CD8-positive, alpha-beta memory T cell (primary cell): ENCODE measurements at regions of chr6 and their contacts with region 1.

Region 1: DNA sequence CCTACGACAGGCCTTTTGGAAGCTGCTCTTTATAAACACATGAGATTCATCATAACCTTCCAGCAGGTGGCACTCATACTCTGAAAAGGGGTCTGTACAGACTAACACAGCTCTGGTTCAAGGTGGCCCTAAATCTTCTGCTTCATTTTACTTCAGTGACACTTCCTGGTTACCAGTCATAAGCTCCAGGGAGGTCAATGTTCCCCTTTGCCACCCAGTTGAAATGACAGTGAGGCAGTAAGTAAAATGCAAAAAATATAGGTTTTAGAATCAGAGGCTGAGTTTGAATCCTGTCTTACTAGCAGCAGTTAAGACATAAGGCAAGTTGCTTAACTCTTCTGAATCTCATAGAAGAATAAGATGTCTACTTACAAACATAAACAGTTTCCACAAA is 132.8 kb downstream of the CDK19 start:
- DNase-seq: peak; percentile 17 to 74 (median 70)
- H3K4me3 ChIP-seq: no peak overlapping the region
- H3K4me3 Mint-ChIP-seq: no peak overlapping the region
- H3K27ac ChIP-seq: no peak overlapping the region
- H3K27ac Mint-ChIP-seq: peak overlapping the region in 7 of 8 donors; percentile 12 to 77 (median 58)
- H3K4me1 ChIP-seq: peaks cover 12% of the 10 kb centered on the region
- H3K4me1 Mint-ChIP-seq: peaks cover 19 to 21% (median 21%) of the 10 kb centered on the region in 3 donors
- H3K27me3 ChIP-seq: no peaks in the 10 kb centered on the region
- H3K27me3 Mint-ChIP-seq: no peaks in the 10 kb centered on the region

Region 2: GRCh38 chr6:110567957-110568696 is 114.3 kb before region 1 on chr6:
- CTCF ChIA-PET with region 1: no interaction called
- POLR2A ChIA-PET with region 1: no interaction called
- DNase-seq: no peak
- H3K4me3 ChIP-seq: no peak overlapping the region
- H3K4me3 Mint-ChIP-seq: no peak overlapping the region
- H3K27ac ChIP-seq: no peak overlapping the region
- H3K27ac Mint-ChIP-seq: peak overlapping the region in 5 of 8 donors; percentile 4 to 95 (median 52)
- H3K4me1 ChIP-seq: no peaks in the 10 kb centered on the region
- H3K4me1 Mint-ChIP-seq: peaks cover 4 to 7% (median 7%) of the 10 kb centered on the region in 3 donors
- H3K27me3 ChIP-seq: no peaks in the 10 kb centered on the region
- H3K27me3 Mint-ChIP-seq: no peaks in the 10 kb centered on the region

Region 3: GRCh38 chr6:110656492-110656891 is 26.0 kb before region 1 on chr6:
- CTCF ChIA-PET with region 1: no interaction called
- POLR2A ChIA-PET with region 1: no interaction called
- DNase-seq: no peak
- H3K4me3 ChIP-seq: no peak overlapping the region
- H3K4me3 Mint-ChIP-seq: no peak overlapping the region
- H3K27ac ChIP-seq: no peak overlapping the region
- H3K27ac Mint-ChIP-seq: no peak overlapping the region
- H3K4me1 ChIP-seq: no peaks in the 10 kb centered on the region
- H3K4me1 Mint-ChIP-seq: peaks cover 0 to 18% (median 14%) of the 10 kb centered on the region in 3 donors
- H3K27me3 ChIP-seq: no peaks in the 10 kb centered on the region
- H3K27me3 Mint-ChIP-seq: peaks cover 0 to 1% of the 10 kb centered on the region in 2 donors

Region 4: GRCh38 chr6:110671116-110671846 is 11.2 kb before region 1 on chr6:
- CTCF ChIA-PET with region 1: interaction called, 10 read pairs
- POLR2A ChIA-PET with region 1: no interaction called
- DNase-seq: no peak
- H3K4me3 ChIP-seq: no peak overlapping the region
- H3K4me3 Mint-ChIP-seq: no peak overlapping the region
- H3K27ac ChIP-seq: no peak overlapping the region
- H3K27ac Mint-ChIP-seq: no peak overlapping the region
- H3K4me1 ChIP-seq: no peaks in the 10 kb centered on the region
- H3K4me1 Mint-ChIP-seq: peaks cover 0 to 4% (median 2%) of the 10 kb centered on the region in 3 donors
- H3K27me3 ChIP-seq: no peaks in the 10 kb centered on the region
- H3K27me3 Mint-ChIP-seq: no peaks in the 10 kb centered on the region

Region 5: GRCh38 chr6:110815217-110816109 is 133.0 kb after region 1 on chr6 and contains the start of gene CDK19:
- CTCF ChIA-PET with region 1: interaction called, 8 read pairs
- POLR2A ChIA-PET with region 1: interaction called, 12 read pairs
- DNase-seq: peak; percentile 98 to 99 (median 99)
- H3K4me3 ChIP-seq: peak within 1 kb of the TSS; percentile 73
- H3K4me3 Mint-ChIP-seq: peak within 1 kb of the TSS; percentile 92 to 100 (median 97)
- H3K27ac ChIP-seq: peak within 1 kb of the TSS; percentile 78
- H3K27ac Mint-ChIP-seq: peak within 1 kb of the TSS; percentile 97 to 100 (median 99)
- H3K4me1 ChIP-seq: peaks cover 22% of the 10 kb centered on the region
- H3K4me1 Mint-ChIP-seq: peaks cover 20 to 37% (median 28%) of the 10 kb centered on the region in 3 donors
- H3K27me3 ChIP-seq: no peaks in the 10 kb centered on the region
- H3K27me3 Mint-ChIP-seq: no peaks in the 10 kb centered on the region
- total RNA-seq, gene CDK19: 8.4 to 9.1 TPM

Region 6: DNA sequence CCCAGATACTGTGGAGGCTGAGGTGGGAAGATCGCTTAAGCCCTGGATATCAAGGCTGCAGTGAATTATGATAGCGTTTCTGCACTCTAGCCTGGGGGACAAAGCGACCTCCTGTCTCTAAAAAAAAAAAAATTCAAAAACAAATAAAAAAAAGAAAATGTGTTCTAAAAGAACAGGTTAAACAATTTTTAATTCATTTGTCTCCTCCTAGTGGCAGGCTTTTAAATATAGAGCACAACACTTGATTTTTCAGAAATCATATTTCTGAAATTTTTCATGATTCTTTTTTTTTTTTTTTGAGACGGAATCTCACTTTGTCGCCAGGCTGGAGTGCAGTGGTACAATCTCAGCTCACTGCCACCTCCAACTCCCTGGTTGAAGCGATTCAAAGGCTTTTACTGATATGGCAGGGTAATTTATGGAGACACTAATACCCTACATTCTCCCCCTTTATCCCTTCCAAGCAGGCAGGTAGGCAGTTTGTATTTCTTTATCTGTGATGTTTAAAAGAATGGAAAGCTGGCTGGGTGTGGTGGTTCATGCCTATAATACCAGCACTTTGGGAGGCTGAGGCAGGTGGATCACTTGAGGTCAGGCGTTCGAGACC is 267.3 kb after region 1 on chr6:
- CTCF ChIA-PET with region 1: interaction called, 32 read pairs
- POLR2A ChIA-PET with region 1: no interaction called
- DNase-seq: peak in 2 of 5 donors; percentile 26 to 46
- H3K4me3 ChIP-seq: no peak overlapping the region
- H3K4me3 Mint-ChIP-seq: no peak overlapping the region
- H3K27ac ChIP-seq: no peak overlapping the region
- H3K27ac Mint-ChIP-seq: peak overlapping the region in 1 of 8 donors; percentile 11
- H3K4me1 ChIP-seq: no peaks in the 10 kb centered on the region
- H3K4me1 Mint-ChIP-seq: peaks cover 0 to 5% (median under 1%) of the 10 kb centered on the region in 3 donors
- H3K27me3 ChIP-seq: no peaks in the 10 kb centered on the region
- H3K27me3 Mint-ChIP-seq: peaks cover 9 to 14% of the 10 kb centered on the region in 2 donors

Region 7: DNA sequence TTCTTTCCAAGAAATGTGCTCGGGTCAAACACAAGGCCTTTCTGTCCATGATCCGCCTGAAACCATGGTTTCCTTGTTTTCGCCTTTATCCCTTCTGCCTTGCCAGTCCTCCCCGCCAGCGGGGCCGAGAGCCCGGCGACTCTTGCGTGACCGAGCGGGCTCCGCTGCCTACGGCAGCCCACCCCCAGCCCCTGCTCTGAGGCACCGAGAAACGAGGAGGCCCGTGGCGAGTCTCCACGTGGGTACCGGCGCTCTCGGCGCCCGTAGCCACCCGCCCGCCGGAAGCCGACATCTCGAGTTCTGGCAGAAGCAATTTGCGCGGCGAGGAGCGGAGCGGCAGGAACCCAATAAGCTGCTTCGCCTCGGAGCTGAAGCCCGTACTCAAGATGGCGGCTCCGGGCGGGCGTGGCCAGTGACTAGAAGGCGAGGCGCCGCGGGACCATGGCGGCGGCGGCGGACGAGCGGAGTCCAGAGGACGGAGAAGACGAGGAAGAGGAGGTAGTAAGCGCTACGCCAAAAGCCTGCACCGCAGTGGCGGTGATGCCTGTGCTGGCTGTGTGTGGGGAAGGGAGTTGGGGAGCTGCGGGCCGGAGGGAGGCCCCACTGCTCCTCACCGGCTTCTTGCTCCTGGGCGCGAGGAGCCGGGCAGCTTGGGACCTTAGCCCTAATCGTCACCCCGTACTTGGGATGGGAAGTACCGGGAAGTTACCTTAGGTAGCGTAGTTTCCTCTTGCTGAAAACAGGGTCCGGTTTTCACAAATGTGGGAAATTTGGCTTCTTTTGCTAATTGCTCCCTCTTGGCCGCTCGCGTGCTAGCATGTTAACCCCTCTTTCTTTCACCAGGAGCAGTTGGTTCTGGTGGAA is 276.1 kb after region 1 on chr6 and contains the start of gene GTF3C6:
- CTCF ChIA-PET with region 1: interaction called, 18 read pairs
- POLR2A ChIA-PET with region 1: interaction called, 5 read pairs
- DNase-seq: peak; percentile 89 to 95 (median 90)
- H3K4me3 ChIP-seq: peak within 1 kb of the TSS; percentile 99
- H3K4me3 Mint-ChIP-seq: peak within 1 kb of the TSS; percentile 95 to 100 (median 98)
- H3K27ac ChIP-seq: peak within 1 kb of the TSS; percentile 93
- H3K27ac Mint-ChIP-seq: peak within 1 kb of the TSS; percentile 73 to 99 (median 98)
- H3K4me1 ChIP-seq: peaks cover 13% of the 10 kb centered on the region
- H3K4me1 Mint-ChIP-seq: peaks cover 13 to 25% (median 21%) of the 10 kb centered on the region in 3 donors
- H3K27me3 ChIP-seq: no peaks in the 10 kb centered on the region
- H3K27me3 Mint-ChIP-seq: peaks cover 6 to 13% of the 10 kb centered on the region in 2 donors
- total RNA-seq, gene GTF3C6: 162 to 163 TPM

Region 8: DNA sequence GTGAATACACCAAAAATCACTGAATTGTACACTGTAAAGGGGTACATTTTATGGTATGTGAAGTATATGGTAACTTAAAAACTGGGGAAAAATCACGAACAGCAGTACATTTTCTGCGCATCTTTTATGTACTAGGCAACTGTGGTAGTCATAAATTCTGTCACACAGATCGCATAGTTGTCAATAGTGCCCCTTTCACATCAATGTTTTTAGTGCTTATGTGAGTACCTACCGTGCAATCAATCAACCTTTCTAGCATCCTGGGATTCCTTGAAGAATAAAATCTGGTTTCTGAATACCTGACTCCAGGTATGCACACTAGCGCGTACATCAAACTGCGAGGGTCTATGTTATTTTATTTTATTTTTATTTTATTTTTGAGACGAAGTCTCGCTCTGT is 298.7 kb after region 1 on chr6:
- CTCF ChIA-PET with region 1: interaction called, 10 read pairs
- POLR2A ChIA-PET with region 1: no interaction called
- DNase-seq: no peak
- H3K4me3 ChIP-seq: peak overlapping the region; percentile 95
- H3K4me3 Mint-ChIP-seq: peak overlapping the region; percentile 97 to 99 (median 99)
- H3K27ac ChIP-seq: peak overlapping the region; percentile 93
- H3K27ac Mint-ChIP-seq: peak overlapping the region; percentile 96 to 100 (median 99)
- H3K4me1 ChIP-seq: peaks cover 10% of the 10 kb centered on the region
- H3K4me1 Mint-ChIP-seq: peaks cover 33 to 57% (median 53%) of the 10 kb centered on the region in 3 donors
- H3K27me3 ChIP-seq: no peaks in the 10 kb centered on the region
- H3K27me3 Mint-ChIP-seq: peaks cover 0 to 3% of the 10 kb centered on the region in 2 donors

Region 9: GRCh38 chr6:110999634-111000270 is 317.3 kb after region 1 on chr6:
- CTCF ChIA-PET with region 1: interaction called, 16 read pairs
- POLR2A ChIA-PET with region 1: no interaction called
- DNase-seq: peak in 2 of 5 donors; percentile 24 to 25
- H3K4me3 ChIP-seq: no peak overlapping the region
- H3K4me3 Mint-ChIP-seq: no peak overlapping the region
- H3K27ac ChIP-seq: no peak overlapping the region
- H3K27ac Mint-ChIP-seq: peak overlapping the region in 4 of 8 donors; percentile 0 to 69 (median 12)
- H3K4me1 ChIP-seq: no peaks in the 10 kb centered on the region
- H3K4me1 Mint-ChIP-seq: peaks cover 0 to 4% (median 0%) of the 10 kb centered on the region in 3 donors
- H3K27me3 ChIP-seq: no peaks in the 10 kb centered on the region
- H3K27me3 Mint-ChIP-seq: no peaks in the 10 kb centered on the region